OCI-LY7 (cell line): ENCODE measurements at regions of chr16 and their contacts with region 1.

Region 1: GRCh38 chr16:86519649-86520316 is 9.5 kb downstream of the FOXF1 start:
- DNase-seq: peak; percentile 62
- H3K4me3 ChIP-seq: no peak overlapping the region
- H3K27ac ChIP-seq: no peak overlapping the region
- H3K4me1 ChIP-seq: no peaks in the 10 kb centered on the region
- CTCF ChIP-seq: peak; percentile 88

Region 2: DNA sequence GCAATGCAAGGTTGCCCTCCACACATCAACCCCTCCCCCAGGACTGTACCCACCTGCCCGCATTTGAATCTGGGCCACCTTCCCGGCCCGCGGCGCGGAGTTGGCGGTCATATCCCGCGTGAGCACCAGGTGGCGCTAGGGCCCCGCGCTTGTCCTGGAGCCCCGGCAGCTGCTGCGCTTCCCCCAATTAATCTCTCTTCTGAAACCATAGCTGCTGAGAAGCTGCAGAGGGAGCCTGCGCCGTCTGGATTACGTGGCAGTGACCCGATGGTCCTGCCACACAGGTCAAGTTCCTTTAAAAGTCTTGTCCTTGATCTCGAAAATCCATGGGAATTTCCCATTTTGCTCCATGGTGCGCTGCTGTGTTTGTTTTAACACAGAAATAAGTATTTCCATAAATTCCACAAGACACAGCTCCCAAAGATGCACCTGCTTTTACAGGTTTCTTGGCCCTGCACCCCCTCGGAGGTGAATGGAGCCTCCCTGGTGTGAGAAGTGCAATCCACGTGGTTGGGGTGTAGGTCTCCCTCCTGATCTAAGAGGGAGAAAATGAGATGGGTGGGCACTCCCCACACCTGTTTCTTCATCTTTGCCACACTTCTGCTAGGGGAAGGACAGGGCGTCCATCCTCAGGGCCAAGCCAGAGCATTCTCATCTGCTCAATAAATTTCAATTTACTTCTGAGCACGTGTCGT is 698.2 kb before region 1 on chr16:
- CTCF ChIA-PET with region 1: interaction called, 3 read pairs
- POLR2A ChIA-PET with region 1: no interaction called
- intact Hi-C with region 1: loop called (anchors 10 kb)
- DNase-seq: peak; percentile 90
- H3K4me3 ChIP-seq: no peak overlapping the region
- H3K27ac ChIP-seq: no peak overlapping the region
- H3K4me1 ChIP-seq: peaks cover 12% of the 10 kb centered on the region
- CTCF ChIP-seq: peak; percentile 99

Region 3: DNA sequence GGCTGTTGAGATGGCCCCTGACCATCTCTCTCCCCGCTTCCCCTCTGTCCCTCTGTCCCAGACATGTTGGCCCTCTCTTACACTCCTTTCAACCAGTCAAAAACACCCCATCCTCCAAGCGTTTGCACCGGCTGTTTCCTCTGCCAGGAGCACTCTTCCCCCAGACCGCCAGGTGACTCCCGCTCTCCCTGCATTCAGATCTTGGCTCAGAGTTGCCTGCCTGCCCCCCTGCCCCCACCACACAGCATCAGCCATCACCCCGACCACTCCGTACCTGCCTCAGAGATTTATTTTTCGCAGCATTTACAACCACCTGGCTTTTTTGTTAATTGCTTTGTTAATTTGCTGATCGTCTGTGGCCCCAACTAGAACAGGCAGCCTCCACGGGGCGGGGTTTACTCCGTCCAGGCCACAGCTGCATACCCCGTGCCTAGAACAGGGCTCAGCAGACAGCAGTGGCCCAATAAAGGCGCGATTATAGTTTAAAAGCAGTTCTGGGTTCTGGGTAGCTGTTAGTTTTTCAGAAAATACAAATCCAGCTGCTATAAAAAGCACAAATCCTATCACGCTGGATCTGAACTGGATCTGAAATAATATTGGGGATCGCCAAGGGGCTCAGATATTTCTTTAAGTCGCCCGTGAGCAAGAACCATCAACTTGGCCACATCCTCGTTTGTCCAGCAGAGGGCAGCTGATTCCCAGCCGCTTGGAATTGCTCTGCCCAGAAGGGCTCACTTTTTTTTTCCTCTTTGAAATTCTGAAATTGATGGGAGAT is 447.3 kb before region 1 on chr16:
- CTCF ChIA-PET with region 1: no interaction called
- POLR2A ChIA-PET with region 1: no interaction called
- intact Hi-C with region 1: loop called (anchors 5 kb)
- DNase-seq: peak; percentile 48
- H3K4me3 ChIP-seq: no peak overlapping the region
- H3K27ac ChIP-seq: no peak overlapping the region
- H3K4me1 ChIP-seq: no peaks in the 10 kb centered on the region
- CTCF ChIP-seq: peak; percentile 90

Region 4: GRCh38 chr16:86343027-86343787 is 176.6 kb before region 1 on chr16:
- CTCF ChIA-PET with region 1: no interaction called
- POLR2A ChIA-PET with region 1: no interaction called
- intact Hi-C with region 1: loop called (anchors 1 kb)
- DNase-seq: no peak
- H3K4me3 ChIP-seq: no peak overlapping the region
- H3K27ac ChIP-seq: no peak overlapping the region
- H3K4me1 ChIP-seq: no peaks in the 10 kb centered on the region
- CTCF ChIP-seq: no peak

Region 5: DNA sequence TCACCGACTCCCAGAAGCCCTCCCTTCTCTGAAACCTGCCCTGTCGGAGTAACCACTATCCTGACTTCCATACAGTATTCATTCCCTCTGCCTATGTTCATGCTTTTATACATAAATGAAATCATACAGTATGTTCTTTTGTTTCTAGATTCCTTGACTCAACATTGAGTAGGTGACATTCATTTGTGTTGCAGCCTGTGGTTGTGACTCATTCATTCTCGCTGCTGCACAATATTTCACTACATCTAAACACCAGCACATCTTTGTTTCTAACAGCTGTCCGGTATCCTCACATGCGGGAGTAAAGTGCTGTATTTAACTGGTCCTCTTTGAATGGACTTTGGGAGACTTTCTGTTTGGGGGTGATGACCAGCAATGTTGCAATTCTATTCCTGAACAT is 144.4 kb before region 1 on chr16:
- CTCF ChIA-PET with region 1: no interaction called
- POLR2A ChIA-PET with region 1: no interaction called
- intact Hi-C with region 1: no loop called
- DNase-seq: no peak
- H3K4me3 ChIP-seq: no peak overlapping the region
- H3K27ac ChIP-seq: no peak overlapping the region
- H3K4me1 ChIP-seq: no peaks in the 10 kb centered on the region
- CTCF ChIP-seq: no peak